ENCODE measurements at regions of chr2 and their contacts with region 1.

Region 1: DNA sequence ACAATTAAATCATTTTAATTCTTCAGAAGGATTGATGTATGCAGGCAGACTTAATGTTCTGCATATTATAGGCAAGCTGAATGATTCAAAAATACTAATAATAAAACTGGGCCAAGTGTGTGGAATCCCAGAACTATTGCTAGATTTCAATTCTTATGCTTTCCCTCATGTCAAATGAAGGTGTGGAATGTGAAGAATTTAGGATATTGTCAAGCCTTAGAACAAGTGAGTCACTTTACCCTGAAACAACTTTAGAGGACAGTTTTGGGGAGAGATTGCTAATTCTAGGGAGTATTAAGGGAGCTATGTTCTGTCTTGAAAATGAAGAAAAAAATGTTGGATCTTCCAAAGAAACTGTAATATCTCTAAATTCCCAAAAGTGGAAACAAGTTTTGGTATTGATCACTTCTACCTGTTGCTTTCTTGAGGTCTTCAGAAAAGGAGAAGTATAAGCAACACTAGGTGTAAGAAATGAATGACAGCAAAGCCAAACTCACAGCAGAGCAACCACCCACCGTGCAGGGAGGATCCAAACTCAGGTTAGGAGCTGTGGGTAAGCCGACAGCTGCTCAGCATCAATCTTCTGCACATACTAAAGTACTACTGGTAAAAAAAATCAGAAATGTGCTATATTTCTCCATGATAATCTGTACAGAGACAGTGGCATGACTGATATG is 818.1 kb downstream of the SLC4A3 start:
- DNase-seq: no peak
- H3K4me3 ChIP-seq: no peak overlapping the region
- H3K27ac ChIP-seq: no peak overlapping the region
- H3K4me1 ChIP-seq: no peaks in the 10 kb centered on the region
- H3K27me3 ChIP-seq: peaks cover 26% of the 10 kb centered on the region
- CTCF ChIP-seq: no peak

Region 2: DNA sequence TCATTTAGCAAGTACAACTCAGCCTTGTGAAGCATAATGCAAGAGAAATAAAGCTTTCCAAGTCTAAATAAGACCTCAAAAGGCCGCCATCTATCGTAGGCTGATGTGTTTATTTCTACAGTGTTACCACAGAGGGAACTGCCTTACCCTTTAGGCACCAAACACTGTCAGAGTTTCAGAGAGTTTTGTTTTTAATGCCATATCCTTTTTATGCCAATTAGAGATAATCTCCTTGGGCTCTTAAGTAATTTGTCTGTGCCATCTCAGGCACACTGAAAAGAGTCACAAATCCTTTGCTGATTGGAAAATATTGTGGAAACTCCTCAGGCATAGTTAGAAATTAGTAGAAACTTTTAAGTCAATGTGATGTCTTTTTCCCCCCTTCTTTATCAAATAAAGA is 21.0 kb before region 1 on chr2:
- intact Hi-C with region 1: loop called (anchors 2 kb)
- DNase-seq: no peak
- H3K4me3 ChIP-seq: no peak overlapping the region
- H3K27ac ChIP-seq: no peak overlapping the region
- H3K4me1 ChIP-seq: no peaks in the 10 kb centered on the region
- H3K27me3 ChIP-seq: no peaks in the 10 kb centered on the region
- CTCF ChIP-seq: no peak